MCF 10A (cell line): ENCODE measurements at regions of chr1 and their contacts with region 1.

Region 1: GRCh38 chr1:97524211-97524610 is 396.6 kb downstream of the DPYD start:
- DNase-seq: no peak
- H3K4me3 Mint-ChIP-seq: no peak overlapping the region
- H3K27ac Mint-ChIP-seq: no peak overlapping the region
- H3K4me1 Mint-ChIP-seq: no peaks in the 10 kb centered on the region
- H3K27me3 Mint-ChIP-seq: no peaks in the 10 kb centered on the region
- CTCF ChIP-seq: no peak

Region 2: DNA sequence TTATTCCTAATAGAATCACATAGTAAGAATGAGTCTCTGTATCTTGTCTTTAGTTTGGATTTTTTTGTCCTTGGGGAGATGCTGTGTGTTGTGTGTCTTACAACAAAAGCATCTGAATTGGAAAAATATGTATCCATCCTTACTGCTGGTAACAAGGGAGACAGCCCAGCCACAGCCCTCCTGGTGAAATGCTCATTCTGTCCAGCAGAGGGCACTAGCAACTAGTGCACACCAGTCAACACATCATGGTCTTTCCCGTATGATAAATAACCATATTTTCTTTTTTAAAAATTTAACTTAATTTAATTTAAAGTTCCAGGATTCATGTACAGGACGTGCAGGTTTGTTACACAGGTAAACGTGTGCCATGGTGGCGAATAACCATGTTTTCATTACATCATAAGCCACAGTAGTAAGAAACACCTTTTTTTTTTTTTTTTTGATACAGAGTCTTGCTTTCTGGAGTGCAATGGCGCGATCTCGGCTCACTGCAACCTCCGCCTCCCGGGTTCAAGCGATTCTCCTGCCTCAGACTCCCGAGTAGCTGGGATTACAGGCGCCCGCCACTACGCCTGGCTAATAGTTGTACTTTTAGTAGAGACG is 557.6 kb before region 1 on chr1:
- CTCF ChIA-PET with region 1: interaction called, 6 read pairs
- POLR2A ChIA-PET with region 1: no interaction called
- intact Hi-C with region 1: loop called (anchors 10 kb)
- DNase-seq: peak; percentile 70
- H3K4me3 Mint-ChIP-seq: peak overlapping the region; percentile 4
- H3K27ac Mint-ChIP-seq: no peak overlapping the region
- H3K4me1 Mint-ChIP-seq: peaks cover 6% of the 10 kb centered on the region
- H3K27me3 Mint-ChIP-seq: no peaks in the 10 kb centered on the region
- CTCF ChIP-seq: peak; percentile 90

Region 3: DNA sequence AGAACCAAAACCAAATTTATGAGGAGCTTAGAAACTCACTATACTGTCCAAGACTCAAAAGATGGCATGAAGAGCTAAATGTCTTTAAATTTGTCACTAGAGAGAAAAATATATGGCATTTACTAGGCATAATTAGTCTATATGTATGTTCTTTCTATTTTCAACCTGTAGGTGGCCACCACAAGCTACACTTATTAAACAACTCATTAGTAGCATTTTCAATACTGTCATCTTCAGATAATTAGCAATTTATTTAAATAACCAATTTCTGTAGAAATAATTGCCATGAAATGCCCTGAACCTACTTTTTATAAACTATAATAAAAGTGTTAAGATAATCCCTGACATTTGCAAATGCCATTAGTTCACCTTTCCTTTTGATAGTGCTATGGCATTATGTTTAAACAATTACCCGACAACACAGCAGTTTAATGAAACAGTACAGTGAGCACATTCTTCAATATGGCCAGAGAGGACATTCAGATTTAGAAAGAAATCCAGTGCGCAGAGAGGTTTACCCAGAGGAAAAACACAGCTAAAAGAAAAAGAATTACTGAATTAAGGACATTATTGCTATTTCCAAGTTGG is 280.1 kb before region 1 on chr1:
- CTCF ChIA-PET with region 1: interaction called, 25 read pairs
- POLR2A ChIA-PET with region 1: interaction called, 3 read pairs
- intact Hi-C with region 1: loop called (anchors 1 kb)
- DNase-seq: peak; percentile 35
- H3K4me3 Mint-ChIP-seq: no peak overlapping the region
- H3K27ac Mint-ChIP-seq: peak overlapping the region; percentile 53
- H3K4me1 Mint-ChIP-seq: peaks cover 5% of the 10 kb centered on the region
- H3K27me3 Mint-ChIP-seq: no peaks in the 10 kb centered on the region
- CTCF ChIP-seq: peak; percentile 51

Region 4: DNA sequence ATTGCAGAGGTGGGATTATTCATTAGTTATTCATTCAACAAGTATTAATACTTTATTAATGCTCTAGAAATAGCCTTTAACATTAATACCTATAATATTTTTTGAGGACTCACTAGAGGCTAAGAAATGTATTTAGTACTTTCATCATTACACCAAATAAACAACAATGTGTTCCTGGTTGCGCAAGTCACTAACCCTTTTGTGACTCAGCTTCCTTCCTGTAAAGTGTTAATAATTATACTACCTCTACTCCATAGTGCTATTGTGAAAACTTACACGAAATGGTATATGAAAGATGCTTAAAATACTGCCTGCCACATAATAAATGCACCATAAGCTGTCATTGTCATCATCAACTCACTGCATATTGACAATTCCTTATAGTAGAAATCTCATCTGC is 34.4 kb before region 1 on chr1:
- CTCF ChIA-PET with region 1: interaction called, 13 read pairs
- POLR2A ChIA-PET with region 1: no interaction called
- intact Hi-C with region 1: no loop called
- DNase-seq: peak; percentile 87
- H3K4me3 Mint-ChIP-seq: no peak overlapping the region
- H3K27ac Mint-ChIP-seq: no peak overlapping the region
- H3K4me1 Mint-ChIP-seq: peaks cover 5% of the 10 kb centered on the region
- H3K27me3 Mint-ChIP-seq: no peaks in the 10 kb centered on the region
- CTCF ChIP-seq: no peak

Region 5: DNA sequence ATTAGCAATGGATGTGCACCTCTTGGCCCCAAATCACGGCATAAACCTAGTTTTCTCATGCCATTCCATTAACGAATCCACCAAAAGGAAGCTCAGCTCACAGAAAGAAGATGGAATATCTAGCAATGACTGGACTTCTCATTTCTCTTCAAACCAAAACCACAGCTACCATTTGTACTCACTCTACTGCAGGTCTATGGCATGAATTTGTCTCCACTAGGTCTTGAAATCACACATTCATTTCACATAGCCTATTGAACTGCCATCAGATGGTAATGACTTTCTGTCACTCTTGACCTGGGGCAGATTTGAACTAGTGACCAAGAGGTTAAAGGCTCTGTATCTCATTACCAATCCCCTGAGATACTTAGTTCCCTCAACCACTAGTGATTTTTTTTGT is 13.9 kb after region 1 on chr1:
- CTCF ChIA-PET with region 1: interaction called, 10 read pairs
- POLR2A ChIA-PET with region 1: interaction called, 3 read pairs
- intact Hi-C with region 1: no loop called
- DNase-seq: no peak
- H3K4me3 Mint-ChIP-seq: no peak overlapping the region
- H3K27ac Mint-ChIP-seq: no peak overlapping the region
- H3K4me1 Mint-ChIP-seq: no peaks in the 10 kb centered on the region
- H3K27me3 Mint-ChIP-seq: no peaks in the 10 kb centered on the region
- CTCF ChIP-seq: no peak

Region 6: DNA sequence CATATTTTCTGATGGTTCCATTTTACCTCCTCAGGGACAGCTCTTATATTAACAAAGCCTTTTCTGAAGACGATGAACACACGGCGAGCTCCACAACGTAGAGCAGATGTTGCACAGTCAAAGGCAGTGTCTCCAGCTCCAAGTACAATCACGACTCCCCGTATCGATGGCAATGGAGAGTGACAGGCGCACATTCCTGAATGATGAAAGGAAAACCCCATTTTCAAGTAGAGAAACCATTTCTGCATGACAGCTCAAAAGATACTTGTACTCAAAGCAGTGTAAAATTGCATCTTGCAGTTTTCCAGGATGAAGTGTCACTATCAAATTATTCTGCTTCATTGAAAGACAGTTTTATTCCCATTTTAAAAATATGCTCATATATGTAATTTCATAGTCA is 69.0 kb after region 1 on chr1:
- CTCF ChIA-PET with region 1: no interaction called
- POLR2A ChIA-PET with region 1: no interaction called
- intact Hi-C with region 1: no loop called
- DNase-seq: no peak
- H3K4me3 Mint-ChIP-seq: no peak overlapping the region
- H3K27ac Mint-ChIP-seq: no peak overlapping the region
- H3K4me1 Mint-ChIP-seq: no peaks in the 10 kb centered on the region
- H3K27me3 Mint-ChIP-seq: no peaks in the 10 kb centered on the region
- CTCF ChIP-seq: no peak